ENCODE measurements at regions of chr6 and their contacts with region 1.

Region 1: DNA sequence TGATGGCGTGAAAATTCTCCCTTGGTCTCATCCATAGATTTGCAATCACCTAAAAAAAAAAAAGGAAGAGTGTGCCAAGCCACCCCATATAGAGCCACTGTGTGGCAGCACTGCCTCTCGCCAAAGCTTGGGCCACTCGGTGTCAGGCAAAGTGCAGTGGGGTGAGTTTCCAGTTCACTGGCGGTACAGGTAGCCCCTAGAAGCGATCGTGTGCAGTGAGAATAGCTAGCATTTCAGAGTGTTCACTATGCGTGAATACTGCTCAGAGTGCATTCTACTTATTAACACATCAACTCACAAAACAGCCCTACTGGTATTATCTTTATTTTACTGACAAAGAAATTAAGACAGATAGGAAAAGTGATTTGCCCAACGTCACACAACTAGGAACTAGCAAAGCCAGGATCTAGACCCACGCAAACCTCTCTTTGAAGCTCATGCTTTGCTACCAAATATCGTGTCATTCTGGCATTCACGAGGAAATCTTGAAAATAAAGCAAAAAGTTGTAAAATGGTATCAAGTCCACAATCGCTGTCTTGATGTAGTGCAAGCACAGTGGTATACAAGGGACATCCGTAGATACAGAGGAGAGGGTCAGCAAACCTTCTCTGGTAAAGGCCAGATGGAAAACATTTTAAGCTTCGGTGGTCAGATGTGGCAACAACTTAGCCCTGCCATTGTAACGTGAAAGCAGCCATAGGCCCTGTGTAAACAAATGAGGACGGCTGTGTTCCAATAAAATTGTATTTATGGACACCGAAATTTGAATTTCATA is 10.4 kb upstream of the GCNT2 start:
- DNase-seq: no peak
- ATAC-seq: peak; percentile 99
- H3K4me3 Mint-ChIP-seq: peak overlapping the region; percentile 58
- H3K27ac Mint-ChIP-seq: no peak overlapping the region
- H3K4me1 Mint-ChIP-seq: peaks cover 6% of the 10 kb centered on the region
- H3K27me3 Mint-ChIP-seq: no peaks in the 10 kb centered on the region
- CTCF ChIP-seq: no peak

Region 2: GRCh38 chr6:10528170-10528981 is 17.6 kb after region 1 on chr6:
- CTCF ChIA-PET with region 1: interaction called, 21 read pairs
- POLR2A ChIA-PET with region 1: interaction called, 10 read pairs
- intact Hi-C with region 1: loop called (anchors 1 kb)
- DNase-seq: no peak
- ATAC-seq: peak; percentile 57
- H3K4me3 Mint-ChIP-seq: peak overlapping the region; percentile 97
- H3K27ac Mint-ChIP-seq: peak overlapping the region; percentile 96
- H3K4me1 Mint-ChIP-seq: peaks cover 65% of the 10 kb centered on the region
- H3K27me3 Mint-ChIP-seq: no peaks in the 10 kb centered on the region
- CTCF ChIP-seq: no peak

Region 3: DNA sequence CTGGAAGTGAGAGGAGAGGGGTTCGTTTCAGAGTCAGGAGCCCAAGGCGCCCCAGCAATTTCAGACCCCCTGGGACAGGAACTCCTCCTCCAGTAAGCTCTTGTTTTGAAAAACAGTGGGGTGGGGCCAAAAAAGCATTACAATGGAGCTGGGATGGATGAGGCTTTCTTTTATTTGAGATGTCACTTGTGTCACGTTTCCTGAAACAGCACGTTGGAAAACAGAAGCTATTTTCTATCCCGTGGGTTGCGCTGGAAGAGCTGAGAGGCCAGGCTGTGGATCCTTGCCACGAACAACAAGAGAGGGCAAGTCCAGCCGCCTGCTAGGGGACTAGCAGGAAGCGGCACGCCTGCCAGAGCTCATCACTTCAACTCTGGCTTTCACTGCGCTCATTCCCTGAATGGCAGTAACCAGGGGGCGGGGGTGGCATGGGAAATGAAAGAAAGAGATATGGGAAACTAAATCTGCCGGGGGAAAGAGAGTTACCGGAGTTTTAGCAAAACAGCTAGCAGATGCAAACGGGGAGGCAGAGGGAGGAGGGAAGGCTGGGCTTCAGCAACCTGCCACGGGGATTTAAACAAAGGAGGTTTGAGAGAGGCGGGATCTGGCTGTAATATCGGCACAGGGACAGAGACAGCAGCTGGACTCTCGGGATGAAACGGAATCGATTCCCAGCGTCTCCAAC is 45.0 kb after region 1 on chr6:
- CTCF ChIA-PET with region 1: no interaction called
- POLR2A ChIA-PET with region 1: no interaction called
- intact Hi-C with region 1: loop called (anchors 5 kb)
- DNase-seq: no peak
- ATAC-seq: no peak
- H3K4me3 Mint-ChIP-seq: no peak overlapping the region
- H3K27ac Mint-ChIP-seq: no peak overlapping the region
- H3K4me1 Mint-ChIP-seq: peaks cover 50% of the 10 kb centered on the region
- H3K27me3 Mint-ChIP-seq: no peaks in the 10 kb centered on the region
- CTCF ChIP-seq: no peak

Region 4: DNA sequence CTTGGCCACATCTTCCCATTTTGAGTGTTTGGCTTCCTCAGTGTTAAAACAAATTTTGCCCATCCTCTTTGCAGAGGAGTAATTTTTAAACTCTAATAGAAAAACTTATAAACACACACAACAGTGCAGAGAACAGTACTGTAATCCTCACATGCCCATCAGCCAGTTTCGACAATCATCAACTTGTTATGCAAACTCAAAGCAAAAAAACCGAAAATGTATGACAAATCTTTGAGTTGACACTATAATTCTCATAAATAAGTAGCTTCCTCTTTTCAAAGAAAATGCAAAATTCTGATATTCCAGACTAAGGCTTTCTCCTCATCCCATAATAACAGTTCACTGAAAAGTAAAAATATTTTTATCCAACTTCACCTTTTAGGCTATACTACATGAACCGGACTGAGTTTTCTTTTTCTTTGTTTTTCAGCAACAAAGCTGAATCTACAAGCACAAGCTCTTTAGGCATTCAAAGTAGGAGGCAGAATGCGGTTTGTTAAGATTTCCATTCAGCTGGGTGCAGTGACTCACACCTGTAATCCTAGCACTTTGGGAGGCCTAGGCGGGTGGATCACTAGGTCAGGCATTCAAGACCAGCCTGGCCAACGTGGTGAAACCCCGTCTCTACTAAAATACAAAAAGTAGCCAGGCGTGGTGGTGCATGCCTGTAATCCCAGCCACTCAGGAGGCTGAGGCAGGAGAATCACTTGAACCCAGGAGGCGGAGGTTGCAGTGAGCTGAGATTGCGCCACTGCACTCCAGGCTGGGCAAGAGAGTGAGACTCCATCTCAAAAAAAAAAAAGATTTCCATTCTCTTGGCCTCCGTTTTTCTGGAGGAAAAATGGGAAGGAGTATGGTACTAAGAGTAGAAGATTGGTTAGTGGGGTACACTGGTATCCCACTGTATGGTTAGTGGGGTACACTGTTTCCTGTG is 85.2 kb after region 1 on chr6:
- CTCF ChIA-PET with region 1: interaction called, 3 read pairs
- POLR2A ChIA-PET with region 1: no interaction called
- intact Hi-C with region 1: loop called (anchors 5 kb)
- DNase-seq: no peak
- ATAC-seq: no peak
- H3K4me3 Mint-ChIP-seq: no peak overlapping the region
- H3K27ac Mint-ChIP-seq: peak overlapping the region; percentile 70
- H3K4me1 Mint-ChIP-seq: peaks cover 59% of the 10 kb centered on the region
- H3K27me3 Mint-ChIP-seq: no peaks in the 10 kb centered on the region
- CTCF ChIP-seq: no peak

Region 5: DNA sequence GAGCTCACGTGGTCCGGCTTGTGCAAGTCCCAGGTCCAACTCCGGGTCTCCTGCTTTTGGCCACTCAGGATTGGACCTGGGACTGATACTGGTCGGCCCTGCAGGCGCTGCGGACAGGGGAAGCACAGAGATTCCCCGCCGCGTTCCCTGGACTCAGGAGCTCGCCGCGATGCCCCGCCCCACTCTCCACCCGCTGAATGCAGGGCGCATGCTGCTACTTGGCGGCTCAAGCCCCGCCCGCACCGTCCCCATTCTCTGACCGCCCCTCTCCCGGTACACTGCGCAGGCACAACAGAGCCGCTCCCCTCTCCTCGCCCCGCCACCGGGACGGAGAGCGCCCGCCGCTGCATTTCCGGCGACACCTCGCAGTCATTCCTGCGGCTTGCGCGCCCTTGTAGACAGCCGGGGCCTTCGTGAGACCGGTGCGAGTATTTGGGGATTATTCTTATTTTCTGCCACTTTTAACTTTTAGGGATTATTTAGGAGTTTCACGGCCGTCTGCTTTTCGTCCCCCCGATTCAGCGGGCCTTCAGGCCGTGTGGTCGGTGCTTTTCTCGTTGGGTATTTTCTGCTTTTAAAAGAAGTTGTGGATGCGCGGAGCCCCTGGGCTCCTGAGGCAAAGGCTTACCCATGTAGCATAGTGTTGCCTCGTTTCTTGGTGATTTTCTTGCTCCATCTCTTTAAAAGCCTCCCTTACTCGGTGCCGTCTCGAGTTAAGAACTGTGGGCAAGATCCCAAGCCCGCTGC is 212.2 kb after region 1 on chr6 and contains the start of gene TMEM14C:
- CTCF ChIA-PET with region 1: interaction called, 3 read pairs
- POLR2A ChIA-PET with region 1: no interaction called
- intact Hi-C with region 1: loop called (anchors 1 kb)
- DNase-seq: peak; percentile 78
- ATAC-seq: peak; percentile 98
- H3K4me3 Mint-ChIP-seq: peak within 1 kb of the TSS; percentile 93
- H3K27ac Mint-ChIP-seq: peak within 1 kb of the TSS; percentile 89
- H3K4me1 Mint-ChIP-seq: peaks cover 39% of the 10 kb centered on the region
- H3K27me3 Mint-ChIP-seq: no peaks in the 10 kb centered on the region
- CTCF ChIP-seq: no peak
- total RNA-seq, gene TMEM14C: 23.0 and 23.1 TPM in 2 replicates

Region 6: DNA sequence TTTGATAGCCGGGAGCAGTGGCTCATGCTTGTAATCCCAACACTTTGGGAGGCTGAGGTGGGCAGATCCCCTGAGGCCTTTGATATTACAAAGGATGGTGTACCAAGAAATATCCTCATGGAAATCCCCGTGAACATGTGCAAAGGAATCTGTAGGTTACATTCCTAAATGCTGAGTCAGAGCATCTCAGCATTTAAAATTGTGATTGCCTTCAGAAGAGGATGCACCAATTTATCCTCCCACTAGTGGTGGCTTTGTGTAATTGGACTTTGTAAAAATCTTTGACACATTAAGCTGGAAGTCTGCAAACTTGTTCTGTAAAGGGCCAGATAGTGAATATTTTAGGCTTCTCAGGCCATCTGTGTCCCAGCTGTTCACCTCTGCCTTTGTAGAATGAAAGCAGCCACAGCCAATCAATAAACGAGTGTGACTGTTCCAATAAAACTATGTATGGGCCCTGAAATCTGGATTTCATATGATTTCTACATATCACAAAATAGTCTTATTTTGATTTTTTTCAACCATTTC is 248.6 kb after region 1 on chr6:
- CTCF ChIA-PET with region 1: interaction called, 7 read pairs
- POLR2A ChIA-PET with region 1: no interaction called
- intact Hi-C with region 1: loop called (anchors 1 kb)
- DNase-seq: no peak
- ATAC-seq: peak; percentile 54
- H3K4me3 Mint-ChIP-seq: no peak overlapping the region
- H3K27ac Mint-ChIP-seq: no peak overlapping the region
- H3K4me1 Mint-ChIP-seq: peaks cover 5% of the 10 kb centered on the region
- H3K27me3 Mint-ChIP-seq: no peaks in the 10 kb centered on the region
- CTCF ChIP-seq: no peak

Region 7: GRCh38 chr6:11064836-11065235 is 554.1 kb after region 1 on chr6:
- CTCF ChIA-PET with region 1: interaction called, 4 read pairs
- POLR2A ChIA-PET with region 1: no interaction called
- intact Hi-C with region 1: loop called (anchors 1 kb)
- DNase-seq: no peak
- ATAC-seq: no peak
- H3K4me3 Mint-ChIP-seq: no peak overlapping the region
- H3K27ac Mint-ChIP-seq: no peak overlapping the region
- H3K4me1 Mint-ChIP-seq: no peaks in the 10 kb centered on the region
- H3K27me3 Mint-ChIP-seq: no peaks in the 10 kb centered on the region
- CTCF ChIP-seq: no peak

Measured in activated B cell treated with CpG ODN at 0.5 μM for 24 hours (primary cell).